Ascending aorta (tissue), 2 donors: ENCODE measurements at regions of chr9 and their contacts with region 1.

Region 1: GRCh38 chr9:137605121-137606004 is at the start of gene ARRDC1:
- DNase-seq: peak; percentile 75 to 97
- H3K4me3 ChIP-seq: peak within 1 kb of the TSS; percentile 94 to 96
- H3K27ac ChIP-seq: peak within 1 kb of the TSS; percentile 71 to 79
- H3K4me1 ChIP-seq: peaks cover 6 to 19% of the 10 kb centered on the region in 2 donors
- H3K27me3 ChIP-seq: no peaks in the 10 kb centered on the region
- CTCF ChIP-seq: peak in 1 of 3 experiments; percentile 11
- total RNA-seq, gene ARRDC1: 56.8 TPM

Region 2: GRCh38 chr9:137459147-137459600 is 146.2 kb before region 1 on chr9 and contains the start of gene NSMF:
- intact Hi-C with region 1: loop called (anchors 10 kb)
- DNase-seq: peak; percentile 67 to 95
- H3K4me3 ChIP-seq: peak within 1 kb of the TSS; percentile 67 to 89
- H3K27ac ChIP-seq: peak within 1 kb of the TSS; percentile 92 to 95
- H3K4me1 ChIP-seq: peaks cover 40% of the 10 kb centered on the region in 2 donors
- H3K27me3 ChIP-seq: no peaks in the 10 kb centered on the region
- CTCF ChIP-seq: peak in 1 of 3 experiments; percentile 31
- total RNA-seq, gene NSMF: 231 TPM

Region 3: DNA sequence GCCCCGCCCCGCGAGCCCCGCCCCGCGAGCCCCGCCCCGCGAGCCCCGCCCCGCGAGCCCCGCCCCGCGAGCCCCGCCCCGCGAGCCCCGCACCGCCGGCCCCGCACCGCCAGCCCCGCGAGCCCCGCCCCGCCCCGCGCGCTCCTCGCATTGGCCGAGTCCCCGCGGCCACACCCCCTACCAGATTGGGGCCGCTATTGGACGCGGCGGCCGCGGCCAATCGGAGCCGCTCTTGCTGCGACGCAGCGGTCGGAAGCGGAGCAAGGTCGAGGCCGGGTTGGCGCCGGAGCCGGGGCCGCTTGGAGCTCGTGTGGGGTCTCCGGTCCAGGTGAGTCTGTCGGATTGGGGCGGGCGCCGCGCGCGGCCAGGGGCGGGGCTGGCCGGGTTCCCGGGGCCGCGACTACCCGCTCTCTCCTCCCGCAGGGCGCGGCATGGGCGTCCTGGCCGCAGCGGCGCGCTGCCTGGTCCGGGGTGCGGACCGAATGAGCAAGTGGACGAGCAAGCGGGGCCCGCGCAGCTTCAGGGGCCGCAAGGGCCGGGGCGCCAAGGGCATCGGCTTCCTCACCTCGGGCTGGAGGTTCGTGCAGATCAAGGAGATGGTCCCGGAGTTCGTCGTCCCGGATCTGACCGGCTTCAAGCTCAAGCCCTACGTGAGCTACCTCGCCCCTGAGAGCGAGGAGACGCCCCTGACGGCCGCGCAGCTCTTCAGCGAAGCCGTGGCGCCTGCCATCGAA is 53.5 kb before region 1 on chr9 and contains the start of gene MRPL41:
- intact Hi-C with region 1: loop called (anchors 1 kb)
- DNase-seq: peak; percentile 56 to 94
- H3K4me3 ChIP-seq: peak within 1 kb of the TSS; percentile 79 to 91
- H3K27ac ChIP-seq: peak within 1 kb of the TSS; percentile 88 to 96
- H3K4me1 ChIP-seq: peaks cover 3 to 18% of the 10 kb centered on the region in 2 donors
- H3K27me3 ChIP-seq: no peaks in the 10 kb centered on the region
- CTCF ChIP-seq: no peak
- total RNA-seq, gene MRPL41: 121 TPM

Region 4: GRCh38 chr9:137578518-137579258 is 26.7 kb before region 1 on chr9 and contains the start of gene DPH7:
- intact Hi-C with region 1: loop called (anchors 1 kb)
- DNase-seq: peak; percentile 63 to 97
- H3K4me3 ChIP-seq: peak within 1 kb of the TSS; percentile 88 to 92
- H3K27ac ChIP-seq: peak within 1 kb of the TSS; percentile 70 to 78
- H3K4me1 ChIP-seq: peaks cover 0 to 18% of the 10 kb centered on the region in 2 donors
- H3K27me3 ChIP-seq: no peaks in the 10 kb centered on the region
- CTCF ChIP-seq: peak; percentile 89 to 95 (median 93)
- total RNA-seq, gene DPH7: 57.2 TPM

Region 5: GRCh38 chr9:137590462-137591383 is 14.6 kb before region 1 on chr9 and contains the start of gene ZMYND19:
- intact Hi-C with region 1: loop called (anchors 1 kb)
- DNase-seq: peak; percentile 46 to 93
- H3K4me3 ChIP-seq: peak within 1 kb of the TSS; percentile 76 to 97
- H3K27ac ChIP-seq: peak within 1 kb of the TSS; percentile 43 to 60
- H3K4me1 ChIP-seq: peaks cover 7 to 14% of the 10 kb centered on the region in 2 donors
- H3K27me3 ChIP-seq: no peaks in the 10 kb centered on the region
- CTCF ChIP-seq: no peak
- total RNA-seq, gene ZMYND19: 4.3 TPM

Region 6: DNA sequence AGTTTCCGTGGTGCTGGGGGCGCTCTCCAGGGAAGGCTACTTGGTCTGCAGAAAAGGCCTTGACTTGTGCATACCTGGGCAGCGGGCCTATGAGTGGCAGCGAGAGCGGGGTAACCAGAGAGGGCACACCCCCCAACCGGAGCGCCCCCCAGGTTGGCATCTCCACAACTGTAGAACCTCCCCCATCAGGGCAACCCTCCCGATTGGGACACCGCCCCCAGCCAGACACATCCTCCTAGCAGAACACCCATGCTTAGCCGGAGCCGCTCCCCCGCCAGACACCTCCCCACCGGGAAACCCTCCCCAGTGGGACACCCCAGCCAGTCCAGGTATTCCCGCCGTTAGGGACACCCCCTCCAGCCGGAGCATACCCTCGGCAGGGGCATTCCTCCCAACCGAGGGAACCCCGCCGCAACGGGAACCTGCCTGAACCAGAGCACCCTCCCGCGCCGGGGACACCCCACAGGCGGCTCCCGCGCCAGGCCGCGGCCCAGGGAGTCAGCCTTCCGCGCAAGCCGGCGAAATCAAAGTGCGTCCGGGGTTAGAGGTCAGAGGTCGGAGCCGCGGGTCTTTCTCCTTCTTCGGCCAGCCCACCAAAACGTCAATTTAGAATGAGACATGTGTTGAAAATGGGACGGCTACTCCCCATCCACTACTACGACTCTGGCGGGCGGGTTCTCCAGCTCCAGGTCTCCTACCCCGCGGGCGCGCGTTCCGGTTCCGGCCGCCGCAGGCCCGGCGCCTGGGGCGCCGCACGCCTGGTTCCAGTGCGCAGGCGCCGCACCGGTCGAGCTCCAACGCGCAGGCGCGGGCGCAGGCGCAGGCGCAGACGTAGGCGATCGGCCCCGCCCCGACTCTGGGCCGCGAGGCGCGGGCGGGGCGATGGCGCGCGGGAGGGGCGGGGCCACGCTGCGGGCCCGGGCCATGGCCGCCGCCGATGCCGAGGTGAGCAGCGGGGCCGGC is 13.0 kb after region 1 on chr9 and contains the start of gene EHMT1:
- intact Hi-C with region 1: loop called (anchors 1 kb)
- DNase-seq: peak; percentile 41 to 89
- H3K4me3 ChIP-seq: peak within 1 kb of the TSS; percentile 79 to 80
- H3K27ac ChIP-seq: peak within 1 kb of the TSS; percentile 83 to 97
- H3K4me1 ChIP-seq: peaks cover 7 to 28% of the 10 kb centered on the region in 2 donors
- H3K27me3 ChIP-seq: no peaks in the 10 kb centered on the region
- CTCF ChIP-seq: no peak
- total RNA-seq, gene EHMT1: 49.9 TPM